ENCODE measurements at regions of chr6 and their contacts with region 1.

Region 1: DNA sequence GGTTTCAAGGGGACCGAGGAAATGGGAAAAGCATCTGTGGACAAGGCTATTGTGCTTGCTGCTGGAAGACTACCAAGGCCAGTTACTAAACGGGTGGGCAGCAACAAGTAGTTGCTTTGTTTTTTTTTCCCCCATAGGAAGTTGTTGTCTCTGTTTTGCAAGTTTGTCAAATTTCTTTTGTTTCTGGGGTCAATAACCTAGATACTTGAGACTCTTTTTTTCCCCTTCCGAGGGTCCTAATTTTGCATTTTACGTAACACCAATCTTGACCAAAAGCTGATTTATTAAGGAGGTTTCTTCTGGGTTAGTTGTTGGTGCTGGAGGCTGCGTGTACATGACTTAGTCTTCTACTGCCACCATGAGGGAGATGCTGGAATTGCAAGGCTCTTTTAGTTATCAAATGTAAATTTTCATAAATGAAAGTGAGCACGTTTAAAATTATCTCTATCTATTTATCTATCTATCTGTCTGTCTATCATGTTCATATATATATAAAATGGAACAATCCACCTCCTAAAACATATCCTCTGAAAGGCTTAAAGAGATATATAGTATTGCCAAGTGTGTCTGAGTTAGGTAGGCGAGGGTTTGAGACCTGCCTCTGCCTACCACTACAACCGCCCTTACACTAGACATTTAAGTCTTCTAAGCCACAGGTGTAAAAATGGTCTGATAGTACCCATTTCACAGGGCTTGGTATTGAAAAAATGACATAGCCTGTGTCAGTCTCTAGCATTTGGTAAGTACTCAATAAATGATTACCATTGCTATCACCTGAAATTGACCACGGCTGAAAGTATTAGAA is 60.2 kb downstream of the GCLC start:
- DNase-seq: peak in 4 of 6 donors; percentile 37 to 71 (median 50)
- ATAC-seq: peak; percentile 63 to 92 (median 88)
- H3K4me3 ChIP-seq: no peak overlapping the region
- H3K27ac ChIP-seq: no peak overlapping the region
- H3K4me1 ChIP-seq: no peaks in the 10 kb centered on the region
- H3K27me3 ChIP-seq: peaks cover 0 to 3% (median 0%) of the 10 kb centered on the region in 4 donors
- CTCF ChIP-seq: peak; percentile 71 to 94 (median 90)

Region 2: GRCh38 chr6:53162602-53163001 is 322.1 kb before region 1 on chr6:
- intact Hi-C with region 1: loop called in 1 of 3 experiments (anchors 5 kb)
- DNase-seq: no peak
- ATAC-seq: no peak
- H3K4me3 ChIP-seq: no peak overlapping the region
- H3K27ac ChIP-seq: no peak overlapping the region
- H3K4me1 ChIP-seq: no peaks in the 10 kb centered on the region
- H3K27me3 ChIP-seq: no peaks in the 10 kb centered on the region
- CTCF ChIP-seq: no peak

Region 3: DNA sequence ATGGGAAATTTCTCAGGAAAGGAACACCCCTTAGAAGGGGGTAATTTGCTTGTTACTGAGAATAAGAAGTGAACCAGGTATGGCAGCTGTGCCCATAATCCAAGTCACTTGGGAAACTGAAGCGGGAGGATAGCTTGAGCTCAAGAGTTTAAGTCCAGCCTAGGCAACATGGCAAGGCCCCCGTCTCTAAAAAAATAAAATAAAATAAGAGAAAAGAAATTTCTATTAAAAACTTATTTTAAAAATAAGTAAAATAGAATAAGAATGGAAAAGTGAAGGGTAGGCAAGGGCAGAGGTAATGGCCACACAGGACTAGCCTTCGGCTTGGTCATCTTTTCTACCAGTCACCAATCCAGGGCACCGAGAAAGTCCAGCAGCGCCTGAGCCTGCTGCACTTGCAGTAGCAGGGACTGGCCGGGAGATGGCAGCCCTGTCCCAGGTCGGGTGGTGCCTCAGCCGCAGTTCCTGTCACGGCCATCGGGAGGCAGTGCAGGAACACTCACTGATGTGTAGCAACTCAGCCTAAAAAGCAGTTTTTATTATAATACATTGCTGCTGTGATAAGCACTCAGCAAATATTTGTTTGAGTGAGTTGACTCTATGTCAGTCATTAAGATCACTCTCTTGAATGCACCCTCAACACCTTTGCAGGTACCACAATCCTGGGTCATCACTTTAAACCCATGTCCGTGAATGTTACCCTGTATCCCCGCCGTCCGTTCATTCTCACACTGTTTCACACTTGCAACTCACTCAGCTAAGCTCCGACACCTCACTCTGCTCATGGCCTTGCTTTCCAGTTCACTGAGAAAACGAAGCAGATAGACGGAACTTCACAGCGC is 312.9 kb before region 1 on chr6:
- intact Hi-C with region 1: loop called in 1 of 3 experiments (anchors 5 kb)
- DNase-seq: peak; percentile 73 to 97 (median 92)
- ATAC-seq: peak; percentile 89 to 100 (median 99)
- H3K4me3 ChIP-seq: no peak overlapping the region
- H3K27ac ChIP-seq: no peak overlapping the region
- H3K4me1 ChIP-seq: no peaks in the 10 kb centered on the region
- H3K27me3 ChIP-seq: no peaks in the 10 kb centered on the region
- CTCF ChIP-seq: peak; percentile 100

Measured in pancreas (tissue), 10 donors.